Mammary epithelial cell (primary cell): ENCODE measurements at regions of chr11 and their contacts with region 1.

Region 1: DNA sequence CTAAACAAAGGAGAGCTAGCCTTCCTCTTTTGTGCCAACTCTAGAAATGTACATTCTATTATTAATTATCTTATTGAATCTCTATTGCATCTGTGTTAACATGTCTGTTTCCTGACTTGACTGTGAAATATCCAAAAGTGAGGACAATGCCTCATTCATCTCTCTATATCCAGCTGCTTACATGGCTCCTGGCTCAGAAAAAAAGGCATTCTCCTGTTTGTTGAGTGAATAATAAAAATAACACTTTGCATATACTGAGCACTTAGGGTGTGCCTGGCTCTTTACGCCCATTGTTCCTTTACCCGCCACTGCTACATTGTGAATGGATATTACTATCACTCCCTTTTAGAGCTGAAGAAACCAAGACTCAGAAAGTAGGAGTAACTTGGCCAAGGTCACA is 19.9 kb downstream of the NRXN2 start:
- DNase-seq: peak; percentile 32
- H3K4me3 ChIP-seq: no peak overlapping the region
- H3K27ac ChIP-seq: no peak overlapping the region
- H3K4me1 ChIP-seq: no peaks in the 10 kb centered on the region
- H3K27me3 ChIP-seq: peaks cover 3% of the 10 kb centered on the region
- CTCF ChIP-seq: no peak

Region 2: GRCh38 chr11:64419818-64420485 is 283.1 kb before region 1 on chr11:
- CTCF ChIA-PET with region 1: interaction called, 15 read pairs
- dilution Hi-C with region 1: no loop called
- in situ Hi-C with region 1: no loop called
- intact Hi-C with region 1: no loop called
- DNase-seq: no peak
- H3K4me3 ChIP-seq: no peak overlapping the region
- H3K27ac ChIP-seq: no peak overlapping the region
- H3K4me1 ChIP-seq: no peaks in the 10 kb centered on the region
- H3K27me3 ChIP-seq: no peaks in the 10 kb centered on the region
- CTCF ChIP-seq: no peak

Region 3: DNA sequence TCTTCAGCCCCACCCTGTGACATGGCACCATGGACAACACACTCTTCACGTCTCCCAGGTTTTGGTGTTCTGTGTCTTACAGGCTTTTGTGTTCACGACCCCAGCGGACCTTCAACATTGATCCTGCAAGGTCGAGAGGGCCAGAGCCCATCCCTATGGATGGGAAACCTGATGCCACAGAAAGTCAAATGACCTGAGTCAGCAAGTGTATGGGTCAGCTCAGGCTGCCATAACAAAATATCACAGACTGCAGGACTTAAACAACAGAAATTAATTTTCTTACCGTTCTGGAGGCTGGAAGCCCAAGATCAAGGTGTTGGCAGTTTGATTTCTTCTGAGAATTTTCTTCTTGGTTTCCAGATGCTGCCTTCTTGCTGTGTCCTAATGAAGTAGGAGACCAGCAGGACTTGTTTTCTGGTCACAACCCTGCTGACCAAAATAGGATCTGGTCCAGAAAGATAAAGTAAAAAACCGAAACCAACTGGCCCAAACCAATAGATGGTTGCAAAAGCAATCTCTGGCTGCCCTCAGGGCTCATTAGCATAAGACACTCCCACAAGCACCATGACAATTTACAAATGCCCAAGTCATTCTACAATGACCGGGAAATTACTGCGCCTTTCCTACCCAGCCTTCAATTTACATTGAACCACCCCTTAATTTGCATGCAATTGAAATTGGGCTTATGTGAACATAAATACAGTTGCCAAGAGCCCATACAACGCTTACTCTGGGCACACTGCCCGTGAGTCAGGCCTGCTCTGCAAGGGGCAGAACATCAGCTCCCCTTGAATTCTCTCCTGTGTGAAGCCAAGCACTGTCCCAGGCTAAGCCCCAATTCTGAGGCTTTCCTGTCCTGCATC is 230.2 kb before region 1 on chr11:
- CTCF ChIA-PET with region 1: no interaction called
- dilution Hi-C with region 1: no loop called
- in situ Hi-C with region 1: no loop called
- intact Hi-C with region 1: no loop called
- DNase-seq: no peak
- H3K4me3 ChIP-seq: no peak overlapping the region
- H3K27ac ChIP-seq: no peak overlapping the region
- H3K4me1 ChIP-seq: no peaks in the 10 kb centered on the region
- H3K27me3 ChIP-seq: no peaks in the 10 kb centered on the region
- CTCF ChIP-seq: no peak

Region 4: GRCh38 chr11:64562728-64563685 is 140.0 kb before region 1 on chr11:
- CTCF ChIA-PET with region 1: interaction called, 10 read pairs
- dilution Hi-C with region 1: no loop called
- in situ Hi-C with region 1: no loop called
- intact Hi-C with region 1: no loop called
- DNase-seq: no peak
- H3K4me3 ChIP-seq: no peak overlapping the region
- H3K27ac ChIP-seq: no peak overlapping the region
- H3K4me1 ChIP-seq: peaks cover 7% of the 10 kb centered on the region
- H3K27me3 ChIP-seq: no peaks in the 10 kb centered on the region
- CTCF ChIP-seq: no peak

Region 5: DNA sequence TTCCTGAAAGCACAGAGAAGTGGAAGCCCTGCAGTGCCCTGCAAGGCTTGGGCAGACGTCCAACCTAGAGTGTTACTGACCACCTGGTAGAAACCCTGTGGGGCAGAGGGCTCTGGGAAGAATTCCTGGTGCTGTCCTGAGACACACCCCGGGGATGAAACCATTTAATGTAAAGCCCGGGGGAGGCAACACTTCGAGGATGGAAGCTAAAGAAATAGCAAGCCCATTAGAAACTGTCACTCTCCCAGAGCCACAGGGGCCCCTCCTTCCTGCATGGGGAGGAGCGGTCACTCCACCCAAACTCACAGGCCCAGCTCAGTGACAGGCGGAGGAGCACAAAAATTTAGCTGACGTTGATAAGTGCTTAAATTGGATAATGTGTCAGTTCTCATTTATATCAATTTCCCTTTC is 37.6 kb before region 1 on chr11:
- CTCF ChIA-PET with region 1: interaction called, 11 read pairs
- dilution Hi-C with region 1: no loop called
- in situ Hi-C with region 1: no loop called
- intact Hi-C with region 1: no loop called
- DNase-seq: no peak
- H3K4me3 ChIP-seq: no peak overlapping the region
- H3K27ac ChIP-seq: no peak overlapping the region
- H3K4me1 ChIP-seq: peaks cover 9% of the 10 kb centered on the region
- H3K27me3 ChIP-seq: no peaks in the 10 kb centered on the region
- CTCF ChIP-seq: no peak